ENCODE measurements at regions of chrX and their contacts with region 1.

Region 1: GRCh38 chrX:51487960-51488267 is 8.5 kb downstream of the NUDT11 start:
- DNase-seq: no peak
- H3K4me3 ChIP-seq: no peak overlapping the region
- H3K27ac ChIP-seq: no peak overlapping the region
- H3K4me1 ChIP-seq: no peaks in the 10 kb centered on the region
- H3K27me3 ChIP-seq: no peaks in the 10 kb centered on the region
- CTCF ChIP-seq: no peak

Region 2: GRCh38 chrX:50996930-50997329 is 491.0 kb before region 1 on chrX:
- CTCF ChIA-PET with region 1: no interaction called
- dilution Hi-C with region 1: no loop called
- in situ Hi-C with region 1: no loop called
- intact Hi-C with region 1: no loop called
- DNase-seq: no peak
- H3K4me3 ChIP-seq: no peak overlapping the region
- H3K27ac ChIP-seq: no peak overlapping the region
- H3K4me1 ChIP-seq: no peaks in the 10 kb centered on the region
- H3K27me3 ChIP-seq: peaks cover 6% of the 10 kb centered on the region
- CTCF ChIP-seq: peak; percentile 7 to 27

Region 3: DNA sequence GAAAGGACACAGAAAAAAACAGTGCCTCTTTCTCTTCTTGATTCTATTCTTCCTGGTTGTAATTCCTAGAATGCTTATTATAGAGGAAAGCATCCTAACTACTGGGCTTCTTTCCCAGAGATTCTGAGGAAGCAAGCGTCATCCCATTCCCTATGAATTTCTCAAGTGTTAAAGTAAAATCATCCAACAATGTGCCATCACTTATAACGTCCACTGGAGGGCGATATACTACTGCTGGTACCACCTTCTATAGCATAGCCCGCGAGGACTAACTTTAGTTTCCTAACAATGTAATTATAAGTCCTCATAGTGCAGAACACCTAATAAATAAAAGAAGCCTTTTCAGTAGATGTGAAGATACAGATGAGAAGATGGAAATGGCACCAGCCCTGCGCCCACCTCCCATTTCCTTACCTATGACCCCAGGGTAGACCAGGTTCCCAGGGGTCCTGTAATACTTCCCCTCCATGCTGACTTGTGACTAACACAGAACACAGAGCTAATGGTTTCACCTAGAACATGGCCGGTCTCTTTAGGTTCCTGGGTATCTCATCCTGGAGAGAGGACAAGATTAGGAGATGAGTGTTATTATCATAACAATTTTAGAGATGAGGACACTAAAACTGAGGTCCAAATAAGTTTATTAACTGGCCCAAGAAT is 126.6 kb after region 1 on chrX:
- CTCF ChIA-PET with region 1: no interaction called
- dilution Hi-C with region 1: no loop called
- in situ Hi-C with region 1: no loop called
- intact Hi-C with region 1: loop called (anchors 1 kb)
- DNase-seq: peak; percentile 14
- H3K4me3 ChIP-seq: no peak overlapping the region
- H3K27ac ChIP-seq: no peak overlapping the region
- H3K4me1 ChIP-seq: no peaks in the 10 kb centered on the region
- H3K27me3 ChIP-seq: peaks cover 8% of the 10 kb centered on the region
- CTCF ChIP-seq: peak; percentile 67 to 68

Region 4: DNA sequence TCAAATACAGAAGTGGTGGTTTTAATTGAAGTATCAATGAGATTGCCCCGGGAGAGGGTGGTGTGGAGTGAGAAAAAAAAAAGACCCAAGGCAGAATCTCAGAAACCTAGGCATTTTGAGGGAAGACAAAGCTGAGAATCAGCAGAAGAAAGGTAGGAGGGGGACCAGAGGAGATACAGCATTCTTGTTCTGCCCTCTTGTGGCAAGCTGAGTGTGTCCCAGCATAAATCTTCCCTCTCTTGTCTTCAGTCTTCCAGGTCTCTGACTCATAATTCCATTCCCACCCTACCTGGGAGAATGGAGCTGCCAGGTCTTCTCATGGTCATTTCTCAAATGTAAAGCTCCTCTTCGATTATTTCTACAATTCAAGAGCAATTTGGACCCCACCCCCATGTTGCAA is 372.8 kb after region 1 on chrX:
- CTCF ChIA-PET with region 1: no interaction called
- dilution Hi-C with region 1: no loop called
- in situ Hi-C with region 1: no loop called
- intact Hi-C with region 1: loop called (anchors 2 kb)
- DNase-seq: peak; percentile 38
- H3K4me3 ChIP-seq: no peak overlapping the region
- H3K27ac ChIP-seq: no peak overlapping the region
- H3K4me1 ChIP-seq: no peaks in the 10 kb centered on the region
- H3K27me3 ChIP-seq: no peaks in the 10 kb centered on the region
- CTCF ChIP-seq: peak; percentile 34 to 59

Region 5: DNA sequence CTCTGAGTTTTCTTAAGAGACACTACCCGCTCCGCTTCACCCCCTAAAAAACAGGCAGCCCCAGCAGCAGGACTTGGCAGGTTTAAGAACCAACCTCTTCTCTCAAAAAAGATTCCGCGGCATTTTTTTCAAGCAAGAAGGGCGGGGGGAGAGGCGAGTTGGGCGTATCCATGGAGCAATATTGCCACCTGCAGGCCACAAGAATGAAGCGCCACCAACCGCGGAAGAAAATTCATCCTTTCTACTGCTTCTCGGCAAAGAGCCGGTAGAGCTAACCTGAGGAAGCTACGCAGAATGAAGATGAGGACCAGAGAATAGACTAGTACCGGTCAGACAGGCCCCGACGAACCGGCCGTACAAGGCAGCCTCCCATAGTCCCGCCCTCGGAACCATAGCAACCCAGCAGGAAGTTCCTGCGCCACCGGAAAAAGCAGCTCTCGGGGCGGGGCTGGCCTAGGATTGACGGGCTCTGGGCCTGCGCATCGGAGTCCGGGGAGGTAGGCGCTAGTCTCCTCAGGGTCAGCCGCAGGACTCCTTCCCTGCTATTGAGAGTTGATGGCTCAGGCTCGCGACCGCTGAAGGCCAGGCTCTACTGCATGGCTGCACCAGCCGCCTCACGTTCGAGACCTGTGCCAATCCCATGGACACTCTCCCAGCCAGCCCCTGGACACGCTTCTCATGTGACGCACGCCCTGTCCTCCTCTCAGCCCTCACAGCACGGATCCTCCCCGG is 773.7 kb after region 1 on chrX:
- CTCF ChIA-PET with region 1: no interaction called
- dilution Hi-C with region 1: no loop called
- in situ Hi-C with region 1: no loop called
- intact Hi-C with region 1: loop called (anchors 5 kb)
- DNase-seq: peak; percentile 80
- H3K4me3 ChIP-seq: peak overlapping the region; percentile 61 to 68 (median 67)
- H3K27ac ChIP-seq: peak overlapping the region; percentile 46
- H3K4me1 ChIP-seq: peaks cover 11% of the 10 kb centered on the region
- H3K27me3 ChIP-seq: no peaks in the 10 kb centered on the region
- CTCF ChIP-seq: peak; percentile 91 to 92

Measured in mammary epithelial cell (primary cell).